HepG2 (cell line): ENCODE measurements at regions of chr7 and their contacts with region 1.

Region 1: DNA sequence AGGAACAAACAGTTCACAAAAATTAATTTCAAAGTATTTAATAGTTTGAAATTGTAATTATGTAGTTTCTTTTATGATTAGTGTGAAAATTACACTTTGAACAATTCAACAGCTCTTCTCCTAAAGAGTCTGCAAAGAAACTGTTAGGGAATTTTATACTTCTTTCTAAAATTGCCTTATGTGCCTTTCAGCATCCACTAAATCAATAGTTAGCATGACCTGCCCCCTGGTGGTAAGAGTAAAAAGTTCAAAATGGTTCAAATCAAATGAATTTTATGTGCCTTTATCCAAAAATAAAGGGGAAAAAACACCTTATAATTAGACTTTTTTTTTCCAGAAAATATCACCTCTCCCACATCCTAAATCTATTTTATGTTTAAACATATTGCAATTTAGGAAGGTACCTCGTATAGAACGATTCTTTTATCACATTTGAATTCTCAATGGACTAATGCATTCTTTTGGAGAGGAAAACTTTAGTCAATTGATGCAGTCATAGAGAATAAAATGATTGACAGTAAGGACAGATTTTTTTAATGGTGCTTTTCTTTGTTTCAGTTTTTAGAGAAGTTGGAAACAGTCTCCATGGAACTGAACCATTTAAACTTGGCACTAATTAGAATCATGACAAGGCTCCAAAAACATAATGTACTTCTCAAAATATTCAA is 163.7 kb downstream of the SEMA3D start:
- DNase-seq: peak; percentile 21
- ATAC-seq: no peak
- H3K4me3 ChIP-seq: no peak overlapping the region
- H3K27ac ChIP-seq: no peak overlapping the region
- H3K4me1 ChIP-seq: no peaks in the 10 kb centered on the region
- H3K27me3 ChIP-seq: no peaks in the 10 kb centered on the region
- CTCF ChIP-seq: peak; percentile 64
- EP300 ChIP-seq: no peak
- POLR2A ChIP-seq: no peak
- RAD21 ChIP-seq: no peak

Region 2: DNA sequence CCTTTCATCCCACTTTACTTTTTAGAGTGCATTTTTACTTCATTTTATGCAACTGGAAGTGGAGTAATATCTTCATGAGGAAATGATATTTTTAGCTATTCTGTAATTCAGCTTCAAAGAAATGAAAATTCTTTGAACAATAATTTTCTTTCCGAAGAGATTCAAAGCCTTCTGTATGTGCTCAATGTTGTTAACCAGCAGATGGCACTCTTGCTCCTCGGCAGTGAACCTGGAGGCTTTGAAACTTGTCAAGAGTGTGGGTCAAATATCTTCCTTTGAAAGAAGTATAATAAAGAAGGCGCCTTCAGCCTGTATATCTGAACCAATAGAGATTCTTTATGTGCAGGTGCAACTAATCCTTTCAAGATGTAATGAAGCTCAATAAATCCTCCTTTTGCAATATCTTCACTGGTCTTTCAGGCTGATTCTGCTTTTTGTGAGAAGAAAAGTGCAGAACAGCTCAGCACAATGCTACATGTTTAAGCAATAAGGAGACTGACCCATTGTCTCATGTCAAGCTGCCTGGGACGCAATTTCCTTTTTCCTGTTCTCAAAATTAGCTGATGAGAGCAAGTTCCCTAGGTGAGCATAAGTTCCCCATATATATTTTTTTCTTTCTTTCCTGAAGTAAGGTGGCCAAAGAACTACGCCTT is 1087.0 kb before region 1 on chr7:
- CTCF ChIA-PET with region 1: interaction called, 25 read pairs
- POLR2A ChIA-PET with region 1: no interaction called
- in situ Hi-C with region 1: loop called (anchors 5 kb)
- intact Hi-C with region 1: loop called (anchors 1 kb)
- DNase-seq: peak; percentile 48
- ATAC-seq: peak; percentile 79
- H3K4me3 ChIP-seq: no peak overlapping the region
- H3K27ac ChIP-seq: no peak overlapping the region
- H3K4me1 ChIP-seq: no peaks in the 10 kb centered on the region
- H3K27me3 ChIP-seq: no peaks in the 10 kb centered on the region; a peak in 1 of 5 replicates
- CTCF ChIP-seq: peak; percentile 74
- EP300 ChIP-seq: no peak
- POLR2A ChIP-seq: no peak
- RAD21 ChIP-seq: peak; percentile 43; the same call in 1 of the 2 replicates

Region 3: GRCh38 chr7:84490661-84491060 is 532.5 kb before region 1 on chr7:
- CTCF ChIA-PET with region 1: no interaction called
- POLR2A ChIA-PET with region 1: no interaction called
- in situ Hi-C with region 1: loop called (anchors 25 kb)
- intact Hi-C with region 1: loop called (anchors 2 kb)
- DNase-seq: no peak
- ATAC-seq: peak; percentile 67; the same call in 2 of the 3 replicates
- H3K4me3 ChIP-seq: no peak overlapping the region
- H3K27ac ChIP-seq: no peak overlapping the region
- H3K4me1 ChIP-seq: no peaks in the 10 kb centered on the region
- H3K27me3 ChIP-seq: no peaks in the 10 kb centered on the region; a peak in 1 of 5 replicates
- CTCF ChIP-seq: peak; percentile 32
- EP300 ChIP-seq: no peak
- POLR2A ChIP-seq: no peak
- RAD21 ChIP-seq: no peak

Region 4: GRCh38 chr7:84914598-84914997 is 108.6 kb before region 1 on chr7:
- CTCF ChIA-PET with region 1: interaction called, 3 read pairs
- POLR2A ChIA-PET with region 1: no interaction called
- in situ Hi-C with region 1: loop called (anchors 5 kb)
- intact Hi-C with region 1: loop called (anchors 1 kb)
- DNase-seq: peak; percentile 30
- ATAC-seq: peak; percentile 87
- H3K4me3 ChIP-seq: no peak overlapping the region
- H3K27ac ChIP-seq: no peak overlapping the region
- H3K4me1 ChIP-seq: peaks cover 17% of the 10 kb centered on the region
- H3K27me3 ChIP-seq: no peaks in the 10 kb centered on the region
- CTCF ChIP-seq: peak; percentile 57
- EP300 ChIP-seq: no peak
- POLR2A ChIP-seq: no peak
- RAD21 ChIP-seq: no peak

Region 5: GRCh38 chr7:85102813-85103350 is 79.7 kb after region 1 on chr7:
- CTCF ChIA-PET with region 1: no interaction called
- POLR2A ChIA-PET with region 1: no interaction called
- in situ Hi-C with region 1: no loop called
- intact Hi-C with region 1: no loop called
- DNase-seq: no peak
- ATAC-seq: no peak
- H3K4me3 ChIP-seq: no peak overlapping the region
- H3K27ac ChIP-seq: no peak overlapping the region
- H3K4me1 ChIP-seq: no peaks in the 10 kb centered on the region
- H3K27me3 ChIP-seq: no peaks in the 10 kb centered on the region
- CTCF ChIP-seq: no peak
- EP300 ChIP-seq: no peak
- POLR2A ChIP-seq: no peak
- RAD21 ChIP-seq: no peak